Dorsolateral prefrontal cortex (tissue), 120 donors: ENCODE measurements at regions of chr10 and their contacts with region 1.

Region 1: GRCh38 chr10:57664815-57665214 is 602.9 kb downstream of the IPMK start:
- DNase-seq: no peak
- H3K4me3 ChIP-seq: no peak overlapping the region
- H3K27ac ChIP-seq: no peak overlapping the region
- H3K27me3 ChIP-seq: no peaks in the 10 kb centered on the region
- CTCF ChIP-seq: no peak

Region 2: GRCh38 chr10:57579926-57580325 is 84.9 kb before region 1 on chr10:
- intact Hi-C with region 1: loop called in 1 of 2 experiments (anchors 10 kb)
- DNase-seq: no peak
- H3K4me3 ChIP-seq: no peak overlapping the region
- H3K27ac ChIP-seq: no peak overlapping the region
- H3K27me3 ChIP-seq: no peaks in the 10 kb centered on the region
- CTCF ChIP-seq: peak in 51 of 56 donors; percentile 19 to 65 (median 47)

Region 3: GRCh38 chr10:58189269-58189668 is 524.5 kb after region 1 on chr10:
- intact Hi-C with region 1: no loop called
- DNase-seq: no peak
- H3K4me3 ChIP-seq: no peak overlapping the region
- H3K27ac ChIP-seq: no peak overlapping the region
- H3K27me3 ChIP-seq: peaks cover 0 to 19% (median 0%) of the 10 kb centered on the region in 45 donors
- CTCF ChIP-seq: no peak